ENCODE measurements at regions of chr18 and their contacts with region 1.

Region 1: GRCh38 chr18:13726232-13726971 is at the starts of genes FAM210A and RNMT:
- DNase-seq: peak; percentile 97
- H3K4me3 ChIP-seq: peak within 1 kb of the TSS; percentile 78 to 98 (median 94)
- H3K27ac ChIP-seq: peak within 1 kb of the TSS; percentile 87
- H3K4me1 ChIP-seq: peaks cover 19% of the 10 kb centered on the region
- H3K27me3 ChIP-seq: no peaks in the 10 kb centered on the region
- CTCF ChIP-seq: no peak
- POLR2A ChIP-seq: peak; percentile 79
- total RNA-seq, gene FAM210A: 14.6 and 17.3 TPM in 2 replicates
- total RNA-seq, gene RNMT: 24.4 and 29.5 TPM in 2 replicates

Region 2: DNA sequence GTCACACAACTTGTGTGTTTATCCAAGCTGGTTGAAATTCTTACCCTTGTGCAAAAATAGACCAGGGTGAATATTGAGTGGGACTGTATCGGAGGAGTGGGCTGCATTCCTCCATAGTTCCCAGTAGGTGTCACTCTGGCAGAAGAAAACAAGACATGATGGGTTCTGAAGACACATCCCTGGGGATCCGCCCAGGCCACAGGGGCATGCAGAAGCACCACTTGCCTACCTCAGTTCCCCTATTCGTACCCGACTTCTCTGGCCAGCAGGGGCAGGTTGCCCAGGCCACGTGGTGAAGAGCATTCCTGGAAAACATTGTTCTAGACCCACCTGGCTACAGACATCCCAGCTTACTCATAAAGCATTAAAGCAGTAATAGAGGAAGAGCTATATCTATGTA is 168.3 kb before region 1 on chr18:
- CTCF ChIA-PET with region 1: interaction called, 8 read pairs
- POLR2A ChIA-PET with region 1: no interaction called
- dilution Hi-C with region 1: no loop called
- intact Hi-C with region 1: loop called (anchors 10 kb)
- DNase-seq: peak; percentile 40
- H3K4me3 ChIP-seq: no peak overlapping the region
- H3K27ac ChIP-seq: no peak overlapping the region
- H3K4me1 ChIP-seq: no peaks in the 10 kb centered on the region
- H3K27me3 ChIP-seq: peaks cover 6 to 23% of the 10 kb centered on the region in 2 experiments
- CTCF ChIP-seq: peak; percentile 47 to 62
- POLR2A ChIP-seq: no peak

Region 3: GRCh38 chr18:13688191-13689136 is 37.9 kb before region 1 on chr18:
- CTCF ChIA-PET with region 1: no interaction called
- POLR2A ChIA-PET with region 1: no interaction called
- dilution Hi-C with region 1: no loop called
- intact Hi-C with region 1: no loop called
- DNase-seq: peak; percentile 12
- H3K4me3 ChIP-seq: no peak overlapping the region
- H3K27ac ChIP-seq: no peak overlapping the region
- H3K4me1 ChIP-seq: no peaks in the 10 kb centered on the region
- H3K27me3 ChIP-seq: no peaks in the 10 kb centered on the region
- CTCF ChIP-seq: no peak
- POLR2A ChIP-seq: no peak

Region 4: DNA sequence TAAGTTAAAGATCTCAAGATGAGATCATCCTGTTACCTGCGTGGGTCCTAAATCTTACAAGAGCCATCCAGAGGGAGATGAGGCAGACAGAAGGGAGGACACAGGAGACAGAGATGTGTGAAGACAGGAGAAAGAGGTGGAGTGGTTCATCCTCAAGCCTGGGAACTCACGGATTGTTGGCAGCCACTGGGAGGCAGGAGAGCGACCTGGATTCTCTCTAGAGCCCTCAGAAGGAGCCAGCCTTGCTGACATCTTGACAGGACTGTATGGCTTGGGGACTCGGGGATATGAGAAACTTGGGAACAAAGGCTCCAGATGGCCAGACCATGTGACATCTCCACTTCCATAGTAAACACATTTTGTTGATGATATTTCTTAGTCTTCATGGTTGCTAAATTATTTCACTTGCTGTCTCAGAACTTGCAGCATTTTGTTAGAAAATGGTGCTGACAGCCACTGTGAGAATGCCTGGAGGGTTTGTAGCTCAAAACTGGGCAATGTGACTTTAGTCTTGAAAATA is 246.7 kb after region 1 on chr18:
- CTCF ChIA-PET with region 1: no interaction called
- POLR2A ChIA-PET with region 1: no interaction called
- dilution Hi-C with region 1: no loop called
- intact Hi-C with region 1: no loop called
- DNase-seq: no peak
- H3K4me3 ChIP-seq: no peak overlapping the region
- H3K27ac ChIP-seq: no peak overlapping the region
- H3K4me1 ChIP-seq: no peaks in the 10 kb centered on the region
- H3K27me3 ChIP-seq: no peaks in the 10 kb centered on the region
- CTCF ChIP-seq: no peak
- POLR2A ChIP-seq: no peak